ENCODE measurements at regions of chr1 and their contacts with region 1.

Region 1: GRCh38 chr1:30707412-30708360 is 15.7 kb downstream of the MATN1 start:
- DNase-seq: no peak
- ATAC-seq: peak; percentile 94
- H3K4me3 ChIP-seq: no peak overlapping the region
- H3K27ac ChIP-seq: no peak overlapping the region
- H3K4me1 ChIP-seq: no peaks in the 10 kb centered on the region
- H3K27me3 ChIP-seq: peaks cover 0 to 3% of the 10 kb centered on the region in 2 experiments; a peak in 2 of 4 replicates
- CTCF ChIP-seq: peak; percentile 76 to 95 (median 79)
- EP300 ChIP-seq: no peak
- POLR2A ChIP-seq: no peak
- RAD21 ChIP-seq: peak; percentile 93

Region 2: GRCh38 chr1:29235955-29236684 is 1471.6 kb before region 1 on chr1 and contains the start of gene PTPRU:
- CTCF ChIA-PET with region 1: interaction called, 3 read pairs
- POLR2A ChIA-PET with region 1: no interaction called
- RAD21 ChIA-PET with region 1: interaction called, 3 read pairs
- SMC1A ChIA-PET with region 1: no interaction called
- in situ Hi-C with region 1: loop called (anchors 5 kb)
- intact Hi-C with region 1: no loop called
- DNase-seq: no peak
- ATAC-seq: peak; percentile 93
- H3K4me3 ChIP-seq: peak within 1 kb of the TSS; percentile 27; the same call in 1 of the 2 replicates
- H3K27ac ChIP-seq: no peak within 1 kb of the TSS
- H3K4me1 ChIP-seq: peaks cover 8% of the 10 kb centered on the region
- H3K27me3 ChIP-seq: peaks cover 10 to 21% of the 10 kb centered on the region in 2 experiments
- CTCF ChIP-seq: peak; percentile 53 to 79 (median 58); a peak in 5 of 6 replicates
- EP300 ChIP-seq: no peak
- POLR2A ChIP-seq: no peak
- RAD21 ChIP-seq: peak; percentile 74
- polyA plus RNA-seq, gene PTPRU: 0.04 to 0.05 TPM

Region 3: GRCh38 chr1:29379443-29380073 is 1328.1 kb before region 1 on chr1:
- CTCF ChIA-PET with region 1: no interaction called
- POLR2A ChIA-PET with region 1: no interaction called
- RAD21 ChIA-PET with region 1: no interaction called
- SMC1A ChIA-PET with region 1: no interaction called
- in situ Hi-C with region 1: no loop called
- intact Hi-C with region 1: loop called (anchors 5 kb)
- DNase-seq: peak; percentile 2
- ATAC-seq: no peak
- H3K4me3 ChIP-seq: no peak overlapping the region
- H3K27ac ChIP-seq: no peak overlapping the region
- H3K4me1 ChIP-seq: no peaks in the 10 kb centered on the region
- H3K27me3 ChIP-seq: no peaks in the 10 kb centered on the region
- CTCF ChIP-seq: peak; percentile 38 to 57 (median 44); a peak in 5 of 6 replicates
- EP300 ChIP-seq: no peak
- POLR2A ChIP-seq: no peak
- RAD21 ChIP-seq: peak; percentile 67

Region 4: DNA sequence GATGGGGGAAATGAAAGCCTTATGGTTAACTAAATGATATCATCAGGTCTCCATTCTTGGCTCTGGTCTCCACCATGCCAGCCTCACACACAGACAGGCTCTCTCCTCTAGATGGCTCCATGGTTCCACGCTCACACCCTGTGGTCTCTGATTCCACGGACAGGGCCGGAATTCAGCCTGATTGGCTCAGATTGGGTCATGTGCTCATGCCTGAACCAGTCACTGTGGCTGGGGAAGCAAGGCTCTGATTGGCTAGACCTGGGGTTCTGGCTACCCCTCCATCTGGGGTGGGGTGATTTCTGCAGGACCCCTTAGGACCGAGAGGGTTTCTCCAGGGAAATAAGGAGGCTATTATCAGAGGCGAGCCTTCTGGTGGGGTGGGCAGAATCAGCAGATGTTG is 1194.3 kb before region 1 on chr1:
- CTCF ChIA-PET with region 1: no interaction called
- POLR2A ChIA-PET with region 1: no interaction called
- RAD21 ChIA-PET with region 1: no interaction called
- SMC1A ChIA-PET with region 1: no interaction called
- in situ Hi-C with region 1: no loop called
- intact Hi-C with region 1: loop called (anchors 5 kb)
- DNase-seq: peak; percentile 9
- ATAC-seq: peak; percentile 92
- H3K4me3 ChIP-seq: no peak overlapping the region
- H3K27ac ChIP-seq: no peak overlapping the region
- H3K4me1 ChIP-seq: no peaks in the 10 kb centered on the region
- H3K27me3 ChIP-seq: peaks cover 0 to under 1% of the 10 kb centered on the region in 2 experiments; a peak in 1 of 4 replicates
- CTCF ChIP-seq: peak; percentile 34 to 59 (median 43); a peak in 5 of 6 replicates
- EP300 ChIP-seq: no peak
- POLR2A ChIP-seq: no peak
- RAD21 ChIP-seq: peak; percentile 82

Region 5: GRCh38 chr1:29793101-29793546 is 914.6 kb before region 1 on chr1:
- CTCF ChIA-PET with region 1: no interaction called
- POLR2A ChIA-PET with region 1: no interaction called
- RAD21 ChIA-PET with region 1: interaction called, 8 read pairs
- SMC1A ChIA-PET with region 1: no interaction called
- in situ Hi-C with region 1: no loop called
- intact Hi-C with region 1: loop called (anchors 2 kb)
- DNase-seq: no peak
- ATAC-seq: peak; percentile 86
- H3K4me3 ChIP-seq: no peak overlapping the region
- H3K27ac ChIP-seq: no peak overlapping the region
- H3K4me1 ChIP-seq: no peaks in the 10 kb centered on the region
- H3K27me3 ChIP-seq: no peaks in the 10 kb centered on the region
- CTCF ChIP-seq: peak; percentile 78 to 82 (median 80)
- EP300 ChIP-seq: no peak
- POLR2A ChIP-seq: no peak
- RAD21 ChIP-seq: peak; percentile 83

Region 6: GRCh38 chr1:30379684-30380624 is 327.7 kb before region 1 on chr1:
- CTCF ChIA-PET with region 1: interaction called, 10 read pairs
- POLR2A ChIA-PET with region 1: no interaction called
- RAD21 ChIA-PET with region 1: no interaction called
- SMC1A ChIA-PET with region 1: no interaction called
- in situ Hi-C with region 1: no loop called
- intact Hi-C with region 1: no loop called
- DNase-seq: peak; percentile 19
- ATAC-seq: peak; percentile 79
- H3K4me3 ChIP-seq: no peak overlapping the region
- H3K27ac ChIP-seq: no peak overlapping the region
- H3K4me1 ChIP-seq: no peaks in the 10 kb centered on the region
- H3K27me3 ChIP-seq: peaks cover 0 to 2% of the 10 kb centered on the region in 2 experiments; a peak in 1 of 4 replicates
- CTCF ChIP-seq: peak; percentile 72 to 90 (median 90)
- EP300 ChIP-seq: no peak
- POLR2A ChIP-seq: no peak
- RAD21 ChIP-seq: peak; percentile 76

Region 7: DNA sequence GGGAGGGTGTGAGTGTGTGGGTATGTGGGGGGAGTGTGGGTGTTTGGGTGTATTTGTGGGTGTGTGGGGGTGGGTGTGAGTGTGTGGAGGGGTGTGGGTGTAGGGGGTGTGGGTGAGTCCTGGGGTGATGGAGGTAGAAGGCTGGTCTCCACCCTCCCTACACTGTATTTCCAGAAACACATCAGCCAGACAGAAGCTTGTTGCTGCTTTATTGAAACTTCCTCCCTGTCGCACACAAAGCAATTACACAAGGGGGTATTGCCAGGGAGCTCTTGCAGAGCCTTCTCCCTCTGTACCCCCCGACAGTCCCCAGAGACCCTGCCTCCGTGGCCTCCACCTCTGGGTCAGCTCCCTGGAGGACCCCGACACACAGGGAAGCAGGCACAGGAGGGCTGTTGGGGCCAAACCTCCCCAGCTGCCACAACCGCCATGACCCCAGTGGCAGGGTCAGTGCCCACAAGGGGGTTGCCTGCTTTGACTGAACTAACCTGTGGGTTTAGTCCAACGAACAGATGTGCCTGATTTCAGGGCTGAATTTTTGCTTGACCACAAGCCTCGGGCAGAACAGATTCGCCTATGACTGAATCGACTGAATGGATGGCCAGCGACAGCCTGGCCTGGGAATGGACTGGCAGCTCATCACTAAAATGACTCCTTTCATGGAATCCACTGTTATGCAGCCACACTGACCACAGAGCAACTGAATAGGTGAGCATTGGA is 24.8 kb after region 1 on chr1:
- CTCF ChIA-PET with region 1: no interaction called
- POLR2A ChIA-PET with region 1: no interaction called
- RAD21 ChIA-PET with region 1: no interaction called
- SMC1A ChIA-PET with region 1: no interaction called
- in situ Hi-C with region 1: no loop called
- intact Hi-C with region 1: no loop called
- DNase-seq: no peak
- ATAC-seq: peak; percentile 63
- H3K4me3 ChIP-seq: no peak overlapping the region
- H3K27ac ChIP-seq: no peak overlapping the region
- H3K4me1 ChIP-seq: peaks cover 23% of the 10 kb centered on the region
- H3K27me3 ChIP-seq: no peaks in the 10 kb centered on the region
- CTCF ChIP-seq: no peak
- EP300 ChIP-seq: no peak
- POLR2A ChIP-seq: peak; percentile 62; the same call in 1 of the 2 replicates
- RAD21 ChIP-seq: no peak